A673 (cell line): ENCODE measurements at regions of chr17 and their contacts with region 1.

Region 1: GRCh38 chr17:22669721-22670120 is 977.4 kb downstream of the KCNJ18 start:
- DNase-seq: no peak
- H3K4me3 ChIP-seq: no peak overlapping the region
- H3K27ac ChIP-seq: no peak overlapping the region
- H3K4me1 ChIP-seq: no peaks in the 10 kb centered on the region
- H3K27me3 ChIP-seq: no peaks in the 10 kb centered on the region
- CTCF ChIP-seq: no peak

Region 2: GRCh38 chr17:22600644-22601303 is 68.9 kb before region 1 on chr17:
- CTCF ChIA-PET with region 1: no interaction called
- POLR2A ChIA-PET with region 1: no interaction called
- intact Hi-C with region 1: loop called (anchors 10 kb)
- DNase-seq: peak; percentile 60
- H3K4me3 ChIP-seq: no peak overlapping the region
- H3K27ac ChIP-seq: no peak overlapping the region
- H3K4me1 ChIP-seq: no peaks in the 10 kb centered on the region
- H3K27me3 ChIP-seq: no peaks in the 10 kb centered on the region
- CTCF ChIP-seq: peak; percentile 41; the same call in 1 of the 2 replicates